HEK293T (cell line): ENCODE measurements at regions of chr22 and their contacts with region 1.

Region 1: DNA sequence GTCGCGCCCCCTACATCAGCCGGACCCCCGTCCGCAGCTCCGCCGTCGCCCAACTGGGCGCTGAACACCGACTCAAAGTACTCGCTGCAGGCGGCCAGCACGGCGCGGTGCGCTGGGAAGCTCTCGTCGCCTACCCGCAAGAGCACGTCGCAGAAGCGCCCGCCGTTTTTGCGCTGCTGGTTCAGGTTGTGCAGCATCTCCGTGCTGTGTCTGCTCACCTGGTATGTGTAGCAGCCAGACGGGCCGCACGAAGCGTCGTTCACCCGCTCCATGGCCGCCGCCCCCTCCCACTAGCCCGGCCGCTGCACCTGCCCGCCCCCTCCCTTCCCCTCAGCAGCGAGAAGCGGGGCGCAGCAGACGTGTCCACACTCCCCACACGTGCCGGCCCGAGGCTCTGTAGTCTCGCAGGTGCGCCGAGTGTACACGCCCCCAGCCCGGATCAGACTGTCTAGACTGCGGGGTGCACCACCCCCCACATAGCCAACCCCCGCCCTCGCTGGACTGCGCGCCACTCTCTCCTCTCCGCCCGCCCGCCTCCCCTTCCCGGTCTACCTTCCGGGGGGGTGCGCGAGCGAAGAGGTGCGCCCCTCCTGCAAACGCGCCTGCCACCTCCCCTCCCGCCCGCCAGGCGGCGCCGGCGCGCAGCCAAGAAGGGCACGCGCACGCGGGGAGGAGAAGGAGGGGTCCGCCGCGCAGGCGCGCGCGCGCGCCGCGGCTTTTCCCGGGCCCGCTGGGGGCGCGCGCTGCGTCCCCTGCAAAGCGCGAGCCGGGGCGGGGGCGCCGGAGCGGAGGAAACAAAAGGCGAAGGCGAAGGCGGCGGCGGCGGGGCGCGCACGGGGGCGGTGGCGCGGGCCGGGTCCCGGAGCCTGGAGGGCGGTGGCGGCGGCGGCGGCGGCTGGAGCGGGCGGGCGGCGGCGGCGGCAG is 553 bp downstream of the PATZ1 start:
- DNase-seq: peak; percentile 97

Region 2: GRCh38 chr22:31248138-31248745 is 97.4 kb before region 1 on chr22:
- CTCF ChIA-PET with region 1: no interaction called
- POLR2A ChIA-PET with region 1: no interaction called
- DNase-seq: peak; percentile 85

Region 3: GRCh38 chr22:31290494-31291471 is 54.8 kb before region 1 on chr22:
- CTCF ChIA-PET with region 1: no interaction called
- POLR2A ChIA-PET with region 1: interaction called, 10 read pairs
- DNase-seq: peak; percentile 98

Region 4: DNA sequence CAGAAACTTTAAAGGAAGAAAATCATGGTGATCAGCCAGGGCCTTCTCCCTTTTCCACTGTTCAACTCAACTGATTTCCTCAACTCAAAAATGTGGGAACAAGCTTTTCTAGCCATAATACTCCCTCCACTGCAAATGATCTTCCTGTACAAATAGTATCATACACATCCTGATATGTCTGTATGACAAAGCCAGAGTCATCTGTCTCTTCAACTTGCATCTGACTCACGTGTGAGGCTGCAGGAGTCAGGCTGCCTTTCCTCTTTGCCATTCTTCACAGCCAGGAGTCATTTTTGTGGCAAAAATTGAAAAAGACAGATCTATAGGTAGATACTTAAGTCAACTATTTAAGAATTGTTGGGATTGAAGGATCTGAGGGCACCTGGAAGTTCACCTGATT is 12.7 kb before region 1 on chr22:
- CTCF ChIA-PET with region 1: no interaction called
- POLR2A ChIA-PET with region 1: interaction called, 10 read pairs
- DNase-seq: no peak

Region 5: DNA sequence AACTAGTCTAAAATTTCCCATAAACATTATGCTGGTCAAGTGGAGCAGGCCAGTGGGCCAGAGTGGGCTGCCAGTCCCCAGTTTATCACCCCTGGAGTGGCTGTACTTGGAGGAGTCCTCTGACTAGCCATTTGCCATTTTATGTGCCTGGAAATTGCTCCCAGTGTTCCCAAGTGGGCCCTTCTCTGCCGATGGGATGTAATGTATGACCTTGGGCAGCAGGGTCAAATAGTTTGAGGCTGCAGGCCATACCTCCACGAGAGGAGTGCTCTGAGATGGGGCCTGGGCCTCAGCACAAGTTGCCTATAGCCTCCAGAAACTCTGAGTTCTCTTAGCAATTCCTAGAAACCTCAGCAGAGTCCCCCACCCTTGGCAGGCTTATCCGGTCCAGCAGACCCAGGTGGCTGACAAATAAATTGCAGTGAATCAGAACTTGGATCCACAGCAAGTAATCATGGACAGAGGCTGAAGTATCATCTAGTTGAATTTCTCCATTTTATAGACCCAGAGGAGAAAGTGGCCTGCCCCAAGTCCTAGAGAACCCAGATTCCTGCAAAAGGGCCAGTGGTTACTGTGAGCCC is 18.4 kb after region 1 on chr22:
- CTCF ChIA-PET with region 1: interaction called, 5 read pairs
- POLR2A ChIA-PET with region 1: interaction called, 23 read pairs
- DNase-seq: peak; percentile 10

Region 6: GRCh38 chr22:31399211-31400028 is 53.8 kb after region 1 on chr22 and contains the start of gene DRG1:
- CTCF ChIA-PET with region 1: no interaction called
- POLR2A ChIA-PET with region 1: interaction called, 76 read pairs
- DNase-seq: peak; percentile 100